GM23248 (cell line): ENCODE measurements at regions of chr13 and their contacts with region 1.

Region 1: GRCh38 chr13:42110410-42111155 is 62.1 kb downstream of the DGKH start:
- DNase-seq: peak; percentile 82
- H3K4me3 ChIP-seq: no peak overlapping the region
- H3K27ac ChIP-seq: no peak overlapping the region
- H3K4me1 ChIP-seq: peaks cover 16% of the 10 kb centered on the region
- H3K27me3 ChIP-seq: no peaks in the 10 kb centered on the region

Region 2: GRCh38 chr13:40974460-40975407 is 1135.8 kb before region 1 on chr13:
- in situ Hi-C with region 1: no loop called
- DNase-seq: peak; percentile 51
- H3K4me3 ChIP-seq: no peak overlapping the region
- H3K27ac ChIP-seq: no peak overlapping the region
- H3K4me1 ChIP-seq: peaks cover 7% of the 10 kb centered on the region; the same call in 1 of the 2 replicates
- H3K27me3 ChIP-seq: no peaks in the 10 kb centered on the region

Region 3: GRCh38 chr13:41398494-41399170 is 712.0 kb before region 1 on chr13:
- in situ Hi-C with region 1: loop called (anchors 10 kb)
- DNase-seq: peak; percentile 74
- H3K4me3 ChIP-seq: no peak overlapping the region
- H3K27ac ChIP-seq: peak overlapping the region; percentile 31; the same call in 1 of the 2 replicates
- H3K4me1 ChIP-seq: peaks cover 4% of the 10 kb centered on the region; the same call in 1 of the 2 replicates
- H3K27me3 ChIP-seq: no peaks in the 10 kb centered on the region

Region 4: GRCh38 chr13:41668130-41668757 is 442.3 kb before region 1 on chr13:
- in situ Hi-C with region 1: loop called (anchors 5 kb)
- DNase-seq: peak; percentile 93
- H3K4me3 ChIP-seq: no peak overlapping the region
- H3K27ac ChIP-seq: no peak overlapping the region
- H3K4me1 ChIP-seq: no peaks in the 10 kb centered on the region
- H3K27me3 ChIP-seq: no peaks in the 10 kb centered on the region